K562 (cell line): ENCODE measurements at regions of chr21 and their contacts with region 1.

Region 1: GRCh38 chr21:42258153-42258884 is 39.4 kb downstream of the ABCG1 start:
- DNase-seq: peak; percentile 72 to 90 (median 86)
- ATAC-seq: peak; percentile 92
- H3K4me3 ChIP-seq: no peak overlapping the region
- H3K27ac ChIP-seq: no peak overlapping the region
- H3K4me1 ChIP-seq: no peaks in the 10 kb centered on the region
- H3K27me3 ChIP-seq: peaks cover 20 to 63% of the 10 kb centered on the region in 2 experiments
- CTCF ChIP-seq: peak; percentile 91 to 97 (median 93)
- EP300 ChIP-seq: no peak
- POLR2A ChIP-seq: no peak
- RAD21 ChIP-seq: peak; percentile 72 to 77

Region 2: DNA sequence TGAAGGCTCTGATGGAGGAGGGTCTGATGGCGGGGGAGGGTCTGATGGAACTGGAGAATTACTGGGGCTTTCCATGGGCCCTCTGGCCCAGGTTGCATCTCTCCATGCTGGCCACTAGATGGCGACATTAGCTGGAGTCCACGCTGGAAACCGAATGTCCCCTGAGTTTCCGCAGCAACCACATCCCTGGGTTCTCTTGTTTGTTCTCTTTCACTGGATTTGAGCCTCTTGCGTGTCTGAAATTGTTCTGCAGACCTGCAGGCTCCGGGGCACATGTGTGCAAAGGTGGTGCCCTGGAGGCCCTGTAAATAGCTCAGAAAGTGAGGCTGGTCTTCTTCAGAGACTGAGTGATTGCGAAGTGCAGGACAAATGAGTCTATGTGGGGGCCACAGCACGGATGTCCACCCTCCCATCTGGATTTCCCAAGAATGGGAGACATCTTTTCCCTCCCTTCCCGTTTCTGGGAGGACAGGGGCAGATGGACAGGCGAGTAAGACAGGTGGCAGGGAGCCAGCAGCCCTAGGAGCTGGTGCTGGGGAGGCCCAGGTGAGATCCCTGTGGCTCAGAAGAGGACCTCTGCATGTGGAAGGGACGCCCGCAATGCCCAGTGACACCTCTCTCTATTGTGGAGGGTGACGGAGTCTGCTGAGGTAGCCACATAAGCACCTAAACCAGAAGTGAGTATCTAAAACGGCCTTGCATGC is 112.6 kb before region 1 on chr21:
- CTCF ChIA-PET with region 1: interaction called, 6 read pairs
- POLR2A ChIA-PET with region 1: interaction called, 3 read pairs
- in situ Hi-C with region 1: loop called (anchors 10 kb)
- intact Hi-C with region 1: loop called (anchors 1 kb)
- DNase-seq: peak; percentile 68 to 88 (median 86)
- ATAC-seq: peak; percentile 84
- H3K4me3 ChIP-seq: no peak overlapping the region
- H3K27ac ChIP-seq: no peak overlapping the region
- H3K4me1 ChIP-seq: peaks cover 0 to 8% of the 10 kb centered on the region in 2 experiments; a peak in 2 of 5 replicates
- H3K27me3 ChIP-seq: peaks cover 25 to 65% of the 10 kb centered on the region in 2 experiments; a peak in 4 of 5 replicates
- CTCF ChIP-seq: peak; percentile 88 to 94 (median 93)
- EP300 ChIP-seq: no peak
- POLR2A ChIP-seq: no peak
- RAD21 ChIP-seq: peak; percentile 81 to 92

Region 3: GRCh38 chr21:42156690-42157577 is 101.4 kb before region 1 on chr21:
- CTCF ChIA-PET with region 1: no interaction called
- POLR2A ChIA-PET with region 1: no interaction called
- in situ Hi-C with region 1: loop called (anchors 10 kb)
- intact Hi-C with region 1: no loop called
- DNase-seq: no peak
- ATAC-seq: no peak; the same call in 2 of the 3 replicates
- H3K4me3 ChIP-seq: no peak overlapping the region
- H3K27ac ChIP-seq: no peak overlapping the region
- H3K4me1 ChIP-seq: no peaks in the 10 kb centered on the region
- H3K27me3 ChIP-seq: peaks cover 20 to 55% of the 10 kb centered on the region in 2 experiments; a peak in 4 of 5 replicates
- CTCF ChIP-seq: no peak
- EP300 ChIP-seq: no peak
- POLR2A ChIP-seq: no peak
- RAD21 ChIP-seq: no peak

Region 4: DNA sequence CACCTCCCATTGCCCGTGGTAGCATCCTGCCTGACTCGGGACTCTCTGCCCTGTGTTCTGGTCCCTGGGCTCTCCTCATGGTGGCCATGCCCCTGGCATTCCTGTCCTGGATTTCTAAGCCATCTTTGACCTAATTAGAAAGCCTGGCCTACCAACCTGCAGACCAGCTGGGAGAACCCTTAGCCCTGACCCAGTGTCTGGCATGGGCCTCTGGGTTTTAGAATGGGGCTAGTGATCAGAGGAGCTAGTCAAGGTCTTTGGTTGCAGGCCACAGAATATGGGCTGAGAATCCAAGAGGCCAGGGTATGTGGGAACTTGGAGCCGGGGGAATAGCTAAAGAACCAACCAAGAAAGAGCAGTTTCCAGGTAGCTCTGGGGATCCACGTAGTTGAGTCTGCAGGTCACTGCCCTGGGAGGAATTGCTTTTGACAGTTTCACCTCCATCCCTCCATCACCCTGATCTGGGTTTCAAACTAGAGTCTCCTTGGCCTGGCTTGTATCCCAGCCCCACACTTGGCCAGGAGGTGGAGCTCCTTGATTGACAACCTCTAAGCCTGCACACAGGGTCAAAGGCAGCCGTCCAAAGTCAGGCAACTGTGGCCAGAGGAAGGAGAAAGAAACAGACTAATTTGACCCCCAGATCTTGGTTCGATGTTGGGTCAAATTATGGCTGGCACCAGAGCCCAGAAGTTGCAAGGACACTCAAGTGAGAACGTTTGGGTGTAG is 94.1 kb before region 1 on chr21:
- CTCF ChIA-PET with region 1: interaction called, 3 read pairs
- POLR2A ChIA-PET with region 1: no interaction called
- in situ Hi-C with region 1: loop called (anchors 10 kb)
- intact Hi-C with region 1: loop called (anchors 1 kb)
- DNase-seq: peak in 3 of 4 experiments; percentile 41 to 54 (median 53)
- ATAC-seq: peak; percentile 97
- H3K4me3 ChIP-seq: no peak overlapping the region
- H3K27ac ChIP-seq: no peak overlapping the region
- H3K4me1 ChIP-seq: no peaks in the 10 kb centered on the region
- H3K27me3 ChIP-seq: peaks cover 6 to 13% of the 10 kb centered on the region in 2 experiments; a peak in 3 of 5 replicates
- CTCF ChIP-seq: peak; percentile 70 to 79 (median 71)
- EP300 ChIP-seq: no peak
- POLR2A ChIP-seq: no peak
- RAD21 ChIP-seq: peak; percentile 87 to 92

Region 5: DNA sequence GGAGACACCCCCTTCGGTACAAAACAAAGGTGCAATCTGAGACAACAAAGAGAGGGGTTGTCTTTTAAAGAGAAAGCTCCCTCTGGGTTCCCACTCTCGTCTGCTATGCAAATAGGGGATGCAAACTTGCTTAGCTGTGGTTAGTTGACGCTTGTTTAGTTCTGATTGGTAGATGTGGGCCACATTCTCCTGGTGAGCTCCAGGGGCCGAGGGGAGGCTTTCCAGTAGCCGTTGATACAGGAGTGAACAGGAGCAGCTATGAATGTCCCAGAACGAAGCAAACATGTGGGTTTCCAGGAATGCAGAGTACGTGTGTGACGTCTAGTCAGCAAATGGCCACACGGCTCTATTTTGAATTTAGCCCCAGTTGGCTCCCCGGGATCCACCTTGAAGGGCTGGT is 77.7 kb after region 1 on chr21:
- CTCF ChIA-PET with region 1: no interaction called
- POLR2A ChIA-PET with region 1: no interaction called
- in situ Hi-C with region 1: no loop called
- intact Hi-C with region 1: no loop called
- DNase-seq: no peak
- ATAC-seq: no peak
- H3K4me3 ChIP-seq: no peak overlapping the region
- H3K27ac ChIP-seq: no peak overlapping the region
- H3K4me1 ChIP-seq: peaks cover 0 to 7% of the 10 kb centered on the region in 2 experiments; a peak in 1 of 5 replicates
- H3K27me3 ChIP-seq: peaks cover 0 to 30% of the 10 kb centered on the region in 2 experiments; a peak in 2 of 5 replicates
- CTCF ChIP-seq: no peak
- EP300 ChIP-seq: no peak
- POLR2A ChIP-seq: no peak
- RAD21 ChIP-seq: no peak